ENCODE measurements at regions of chr20 and their contacts with region 1.

Region 1: GRCh38 chr20:46520976-46521579 is 7.7 kb upstream of the ZNF334 start:
- DNase-seq: peak; percentile 68
- ATAC-seq: peak; percentile 98
- H3K4me3 Mint-ChIP-seq: no peak overlapping the region
- H3K27ac Mint-ChIP-seq: no peak overlapping the region
- H3K4me1 Mint-ChIP-seq: no peaks in the 10 kb centered on the region
- H3K27me3 Mint-ChIP-seq: peaks cover 17% of the 10 kb centered on the region
- CTCF ChIP-seq: peak; percentile 68

Region 2: DNA sequence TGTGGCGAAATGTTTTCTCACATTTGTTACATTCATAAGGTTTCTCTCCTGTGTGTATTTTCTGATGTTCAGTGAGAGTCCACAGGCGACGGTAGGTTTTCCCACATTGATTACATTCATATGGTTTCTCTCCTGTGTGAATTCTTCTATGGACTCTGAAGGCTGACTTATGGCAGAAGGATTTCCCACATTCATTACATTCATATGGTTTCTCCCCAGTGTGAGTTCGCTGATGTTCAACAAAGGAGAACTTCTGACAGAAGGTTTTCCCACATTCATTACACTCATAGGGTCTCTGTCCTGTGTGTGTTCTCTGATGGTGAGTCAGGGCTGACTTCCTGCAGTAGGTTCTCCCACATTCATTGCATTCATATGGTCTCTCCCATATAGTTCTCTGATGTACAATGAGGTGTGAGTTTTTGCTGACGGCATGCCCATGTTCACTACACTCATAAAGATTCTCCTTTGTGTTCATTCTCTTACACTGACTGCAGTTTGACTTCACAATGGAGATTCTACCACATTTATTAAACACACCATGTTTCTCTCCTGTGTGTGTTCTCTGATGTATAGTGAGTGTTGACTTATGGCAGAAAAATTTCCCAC is 19.6 kb before region 1 on chr20:
- CTCF ChIA-PET with region 1: no interaction called
- POLR2A ChIA-PET with region 1: no interaction called
- intact Hi-C with region 1: no loop called
- DNase-seq: no peak
- ATAC-seq: no peak
- H3K4me3 Mint-ChIP-seq: no peak overlapping the region
- H3K27ac Mint-ChIP-seq: no peak overlapping the region
- H3K4me1 Mint-ChIP-seq: no peaks in the 10 kb centered on the region
- H3K27me3 Mint-ChIP-seq: peaks cover 22% of the 10 kb centered on the region
- CTCF ChIP-seq: no peak

Region 3: DNA sequence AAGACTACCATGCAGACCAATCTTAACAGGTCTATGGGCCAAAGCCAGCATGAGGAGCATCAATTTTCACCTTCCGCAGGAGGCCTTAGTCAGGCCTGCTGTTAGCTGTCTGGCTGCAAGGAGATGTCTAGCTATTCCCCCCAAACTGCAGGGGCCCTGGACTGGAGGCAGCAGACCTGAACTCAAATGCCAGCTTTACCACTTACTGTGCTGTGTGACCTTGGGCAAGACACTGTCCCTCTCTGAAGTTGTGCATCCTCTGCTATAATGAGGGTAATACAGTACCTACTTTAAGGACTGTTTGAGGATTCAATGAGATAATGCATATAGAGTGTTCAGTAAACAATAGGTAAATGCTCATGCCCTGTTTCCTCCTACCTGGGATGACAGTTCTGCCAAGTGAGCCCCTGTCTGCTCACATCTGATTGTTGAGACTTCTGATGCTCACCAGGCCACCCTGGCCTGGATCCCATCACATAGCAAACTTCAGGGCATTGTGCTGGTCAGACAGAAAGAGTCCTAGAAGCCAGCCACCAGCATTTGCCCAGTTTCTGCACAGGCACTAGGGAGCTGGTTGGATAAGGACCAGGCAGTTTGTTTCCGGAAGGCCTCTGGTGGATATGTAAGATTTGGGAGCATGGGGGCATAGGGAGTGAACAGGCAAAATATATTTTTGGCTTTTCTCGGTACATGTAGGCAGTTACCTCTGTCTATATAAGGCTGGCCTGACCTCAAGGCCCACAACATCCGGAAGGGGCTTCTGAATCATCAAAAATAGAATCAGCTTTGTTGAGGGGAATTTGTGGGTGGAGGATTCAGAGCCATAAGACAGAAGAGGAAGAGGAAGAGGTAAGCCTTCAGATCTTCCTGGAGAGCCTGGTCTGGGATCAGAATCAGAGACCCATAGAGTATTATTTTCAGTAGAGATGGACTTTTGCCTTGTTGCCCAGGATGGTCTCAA is 31.7 kb after region 1 on chr20:
- CTCF ChIA-PET with region 1: interaction called, 14 read pairs
- POLR2A ChIA-PET with region 1: no interaction called
- intact Hi-C with region 1: no loop called
- DNase-seq: peak; percentile 90
- ATAC-seq: peak; percentile 92
- H3K4me3 Mint-ChIP-seq: peak overlapping the region; percentile 42
- H3K27ac Mint-ChIP-seq: peak overlapping the region; percentile 88
- H3K4me1 Mint-ChIP-seq: peaks cover 46% of the 10 kb centered on the region
- H3K27me3 Mint-ChIP-seq: peaks cover 2% of the 10 kb centered on the region
- CTCF ChIP-seq: no peak